ENCODE measurements at regions of chr20 and their contacts with region 1.

Region 1: GRCh38 chr20:9829835-9830234 is 9.0 kb downstream of the PAK5 start:
- DNase-seq: no peak
- H3K4me3 ChIP-seq: no peak overlapping the region
- H3K27ac ChIP-seq: no peak overlapping the region
- H3K4me1 ChIP-seq: no peaks in the 10 kb centered on the region
- H3K27me3 ChIP-seq: no peaks in the 10 kb centered on the region
- CTCF ChIP-seq: no peak
- EP300 ChIP-seq: no peak
- POLR2A ChIP-seq: no peak

Region 2: GRCh38 chr20:9775176-9775575 is 54.7 kb before region 1 on chr20:
- intact Hi-C with region 1: no loop called
- DNase-seq: no peak
- H3K4me3 ChIP-seq: no peak overlapping the region
- H3K27ac ChIP-seq: no peak overlapping the region
- H3K4me1 ChIP-seq: no peaks in the 10 kb centered on the region
- H3K27me3 ChIP-seq: no peaks in the 10 kb centered on the region
- CTCF ChIP-seq: no peak
- EP300 ChIP-seq: no peak
- POLR2A ChIP-seq: no peak

Region 3: DNA sequence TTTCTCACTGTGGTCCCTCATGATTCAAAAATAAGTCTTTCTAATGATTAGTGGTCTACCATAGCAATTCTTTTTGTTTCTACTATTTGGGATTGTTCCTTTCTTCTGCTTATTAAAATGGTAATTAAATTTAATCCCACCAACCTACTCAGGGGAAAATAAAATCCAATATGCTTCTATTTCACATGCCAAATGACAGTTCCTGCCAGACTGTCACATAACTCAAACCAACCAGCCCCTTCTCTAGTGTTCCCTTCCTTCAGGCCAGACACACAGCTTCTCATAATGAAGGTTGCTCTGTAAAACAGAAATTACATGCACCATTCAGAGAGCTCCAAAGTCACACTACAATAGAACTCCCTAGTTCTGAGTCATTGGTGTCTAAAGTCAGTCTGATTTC is 14.2 kb before region 1 on chr20:
- intact Hi-C with region 1: loop called in 1 of 4 experiments (anchors 1 kb)
- DNase-seq: no peak
- H3K4me3 ChIP-seq: no peak overlapping the region
- H3K27ac ChIP-seq: no peak overlapping the region
- H3K4me1 ChIP-seq: no peaks in the 10 kb centered on the region
- H3K27me3 ChIP-seq: no peaks in the 10 kb centered on the region
- CTCF ChIP-seq: no peak
- EP300 ChIP-seq: no peak
- POLR2A ChIP-seq: no peak